Activated B cell treated with CpG ODN at 0.5 μM for 24 hours (primary cell): ENCODE measurements at regions of chr4 and their contacts with region 1.

Region 1: GRCh38 chr4:40309250-40309774 is 25.8 kb upstream of the CHRNA9 start:
- DNase-seq: peak; percentile 78
- ATAC-seq: peak; percentile 20
- H3K4me3 Mint-ChIP-seq: peak overlapping the region; percentile 60
- H3K27ac Mint-ChIP-seq: peak overlapping the region; percentile 92
- H3K4me1 Mint-ChIP-seq: peaks cover 74% of the 10 kb centered on the region
- H3K27me3 Mint-ChIP-seq: no peaks in the 10 kb centered on the region
- CTCF ChIP-seq: no peak

Region 2: GRCh38 chr4:39458505-39459300 is 850.6 kb before region 1 on chr4 and contains the starts of genes LIAS and RPL9:
- CTCF ChIA-PET with region 1: no interaction called
- POLR2A ChIA-PET with region 1: no interaction called
- intact Hi-C with region 1: loop called (anchors 10 kb)
- DNase-seq: peak; percentile 90
- ATAC-seq: peak; percentile 81
- H3K4me3 Mint-ChIP-seq: peak within 1 kb of the TSS; percentile 97
- H3K27ac Mint-ChIP-seq: peak within 1 kb of the TSS; percentile 98
- H3K4me1 Mint-ChIP-seq: peaks cover 36% of the 10 kb centered on the region
- H3K27me3 Mint-ChIP-seq: no peaks in the 10 kb centered on the region
- CTCF ChIP-seq: no peak
- total RNA-seq, gene LIAS: 19.5 and 20.5 TPM in 2 replicates
- total RNA-seq, gene RPL9: 2,632 and 2,865 TPM in 2 replicates

Region 3: DNA sequence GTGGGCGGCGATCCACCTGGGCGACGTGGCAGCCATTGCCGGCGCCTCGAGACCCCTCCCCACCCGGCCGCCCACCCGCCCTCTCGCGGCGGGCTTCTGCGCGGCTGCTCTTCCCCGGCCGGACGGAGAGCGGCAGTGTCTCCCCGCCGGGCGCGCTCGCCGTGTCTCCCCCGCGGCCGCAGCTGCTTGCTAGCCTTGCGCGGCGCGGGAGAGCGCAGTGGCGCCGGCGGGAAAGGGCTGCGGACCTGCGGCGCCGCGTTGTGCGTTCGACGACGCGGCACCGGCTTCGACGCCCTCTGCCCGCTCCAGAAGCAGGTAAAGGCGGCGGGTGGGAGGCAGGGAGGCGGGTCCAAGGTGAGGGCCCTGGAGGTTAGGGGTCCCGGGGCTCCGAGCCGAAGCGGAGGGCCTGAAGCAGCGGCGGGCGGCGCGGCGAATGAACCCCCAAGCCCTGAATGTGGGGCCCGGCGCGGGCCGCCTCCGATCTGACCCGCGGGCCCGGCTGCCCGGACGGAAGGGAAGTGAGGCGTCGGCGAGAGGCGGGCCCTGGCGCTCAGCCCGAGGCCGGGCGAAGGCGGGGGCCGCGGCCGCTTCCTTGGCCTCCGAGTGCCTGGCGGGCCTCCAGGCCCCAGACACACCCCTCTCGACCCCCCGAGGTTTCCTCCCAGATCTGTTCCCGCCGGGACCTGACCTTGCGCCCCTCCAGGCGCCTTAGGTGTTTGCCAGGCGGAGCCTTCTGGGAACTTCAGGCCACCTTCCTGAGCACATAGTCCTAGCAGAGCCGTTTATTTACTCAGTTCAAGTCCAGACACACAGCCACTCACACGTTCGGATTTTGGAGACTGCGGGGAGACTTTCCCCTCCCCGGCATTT is 252.4 kb before region 1 on chr4 and contains the start of gene N4BP2:
- CTCF ChIA-PET with region 1: interaction called, 15 read pairs
- POLR2A ChIA-PET with region 1: interaction called, 6 read pairs
- intact Hi-C with region 1: loop called (anchors 1 kb)
- DNase-seq: peak; percentile 75
- ATAC-seq: peak; percentile 68
- H3K4me3 Mint-ChIP-seq: peak within 1 kb of the TSS; percentile 95
- H3K27ac Mint-ChIP-seq: peak within 1 kb of the TSS; percentile 92
- H3K4me1 Mint-ChIP-seq: peaks cover 27% of the 10 kb centered on the region
- H3K27me3 Mint-ChIP-seq: no peaks in the 10 kb centered on the region
- CTCF ChIP-seq: no peak
- total RNA-seq, gene N4BP2: 6.0 and 6.2 TPM in 2 replicates

Region 4: DNA sequence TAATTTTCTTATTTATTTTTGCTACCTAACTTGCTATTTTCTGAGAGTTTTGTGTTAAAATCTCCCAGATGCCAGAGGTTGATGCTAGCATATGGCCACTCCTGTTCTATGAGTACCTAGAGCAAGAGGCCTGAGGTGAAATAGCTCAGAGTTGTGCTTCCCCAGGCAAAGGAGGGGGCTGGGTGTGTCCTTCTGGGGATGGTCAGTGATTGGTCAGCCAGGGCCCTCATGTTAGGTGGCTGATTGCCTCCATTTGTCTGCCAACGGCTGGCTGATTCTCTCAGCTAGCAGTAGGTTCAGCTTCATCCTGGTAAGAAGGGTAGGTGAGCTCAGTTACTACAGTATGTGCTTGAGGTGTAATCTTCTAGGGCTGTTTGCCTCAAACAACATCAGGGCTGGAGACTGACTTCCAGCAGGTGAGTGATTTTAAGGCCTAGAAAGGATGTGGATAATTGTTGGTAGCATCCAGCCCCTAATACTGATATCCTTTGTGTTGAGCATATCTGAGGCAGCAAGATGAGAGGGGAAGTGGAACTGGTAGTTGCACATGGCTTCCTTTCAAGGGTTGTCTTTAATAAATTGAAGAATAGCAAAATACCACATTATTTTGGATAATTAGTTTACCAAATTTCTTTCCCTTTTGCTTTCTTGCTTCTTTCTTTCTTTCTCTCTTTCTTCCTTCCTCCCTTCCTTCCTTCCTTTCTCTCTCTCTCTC is 175.0 kb before region 1 on chr4:
- CTCF ChIA-PET with region 1: no interaction called
- POLR2A ChIA-PET with region 1: no interaction called
- intact Hi-C with region 1: no loop called
- DNase-seq: no peak
- ATAC-seq: no peak
- H3K4me3 Mint-ChIP-seq: no peak overlapping the region
- H3K27ac Mint-ChIP-seq: no peak overlapping the region
- H3K4me1 Mint-ChIP-seq: no peaks in the 10 kb centered on the region
- H3K27me3 Mint-ChIP-seq: no peaks in the 10 kb centered on the region
- CTCF ChIP-seq: no peak

Region 5: GRCh38 chr4:40193016-40193571 is 116.2 kb before region 1 on chr4:
- CTCF ChIA-PET with region 1: interaction called, 25 read pairs
- POLR2A ChIA-PET with region 1: interaction called, 187 read pairs
- intact Hi-C with region 1: loop called (anchors 2 kb)
- DNase-seq: no peak
- ATAC-seq: peak; percentile 28
- H3K4me3 Mint-ChIP-seq: peak overlapping the region; percentile 97
- H3K27ac Mint-ChIP-seq: peak overlapping the region; percentile 95
- H3K4me1 Mint-ChIP-seq: peaks cover 83% of the 10 kb centered on the region
- H3K27me3 Mint-ChIP-seq: no peaks in the 10 kb centered on the region
- CTCF ChIP-seq: no peak

Region 6: DNA sequence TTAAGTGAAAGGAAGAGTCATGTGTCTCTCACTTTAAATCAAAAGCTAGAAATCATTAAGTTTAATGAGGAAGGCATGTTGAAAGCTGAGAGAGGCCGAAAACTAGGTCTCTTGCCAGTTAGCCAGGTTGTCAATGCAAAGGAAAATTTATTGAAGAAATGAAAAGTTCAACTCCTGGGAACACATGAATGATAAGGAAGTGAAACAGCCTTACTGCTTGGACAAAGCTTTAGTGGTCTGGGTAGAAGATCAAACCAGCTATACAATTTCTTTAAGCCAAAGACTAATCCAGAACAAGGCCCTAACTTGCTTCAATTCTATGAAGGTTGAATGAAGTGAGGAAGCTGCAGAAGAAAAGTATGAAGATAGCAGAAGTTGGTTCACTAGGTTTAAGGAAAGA is 87.6 kb before region 1 on chr4:
- CTCF ChIA-PET with region 1: interaction called, 18 read pairs
- POLR2A ChIA-PET with region 1: interaction called, 10 read pairs
- intact Hi-C with region 1: no loop called
- DNase-seq: no peak
- ATAC-seq: no peak
- H3K4me3 Mint-ChIP-seq: peak overlapping the region; percentile 26
- H3K27ac Mint-ChIP-seq: peak overlapping the region; percentile 70
- H3K4me1 Mint-ChIP-seq: peaks cover 94% of the 10 kb centered on the region
- H3K27me3 Mint-ChIP-seq: no peaks in the 10 kb centered on the region
- CTCF ChIP-seq: no peak

Region 7: DNA sequence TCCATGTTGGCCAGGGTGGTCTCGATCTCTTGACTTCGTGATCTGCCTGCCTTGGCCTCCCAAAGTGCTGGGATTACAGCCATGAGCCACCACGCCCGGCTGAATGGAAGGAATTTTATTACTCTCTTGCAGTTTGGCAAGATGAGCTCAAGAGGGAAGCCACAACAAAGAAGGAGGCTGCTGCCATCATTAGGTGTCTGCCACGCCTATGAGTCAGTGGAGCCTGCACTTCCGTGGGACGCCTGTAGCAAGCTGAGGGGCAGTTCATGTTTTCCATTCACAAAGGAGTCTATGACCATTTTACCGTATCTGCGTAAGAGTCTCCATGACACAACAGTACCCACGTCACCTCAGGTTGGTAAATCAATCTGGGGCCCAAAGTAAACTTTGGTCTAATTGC is 25.3 kb before region 1 on chr4:
- CTCF ChIA-PET with region 1: interaction called, 5 read pairs
- POLR2A ChIA-PET with region 1: interaction called, 10 read pairs
- intact Hi-C with region 1: loop called (anchors 1 kb)
- DNase-seq: no peak
- ATAC-seq: peak; percentile 60
- H3K4me3 Mint-ChIP-seq: no peak overlapping the region
- H3K27ac Mint-ChIP-seq: peak overlapping the region; percentile 26
- H3K4me1 Mint-ChIP-seq: peaks cover 58% of the 10 kb centered on the region
- H3K27me3 Mint-ChIP-seq: no peaks in the 10 kb centered on the region
- CTCF ChIP-seq: no peak